ENCODE measurements at regions of chr18 and their contacts with region 1.

Region 1: GRCh38 chr18:12391618-12392165 is 14.7 kb upstream of the AFG3L2 start:
- DNase-seq: peak; percentile 42
- H3K4me3 ChIP-seq: no peak overlapping the region
- H3K27ac ChIP-seq: no peak overlapping the region
- H3K27me3 ChIP-seq: no peaks in the 10 kb centered on the region
- CTCF ChIP-seq: peak; percentile 100

Region 2: DNA sequence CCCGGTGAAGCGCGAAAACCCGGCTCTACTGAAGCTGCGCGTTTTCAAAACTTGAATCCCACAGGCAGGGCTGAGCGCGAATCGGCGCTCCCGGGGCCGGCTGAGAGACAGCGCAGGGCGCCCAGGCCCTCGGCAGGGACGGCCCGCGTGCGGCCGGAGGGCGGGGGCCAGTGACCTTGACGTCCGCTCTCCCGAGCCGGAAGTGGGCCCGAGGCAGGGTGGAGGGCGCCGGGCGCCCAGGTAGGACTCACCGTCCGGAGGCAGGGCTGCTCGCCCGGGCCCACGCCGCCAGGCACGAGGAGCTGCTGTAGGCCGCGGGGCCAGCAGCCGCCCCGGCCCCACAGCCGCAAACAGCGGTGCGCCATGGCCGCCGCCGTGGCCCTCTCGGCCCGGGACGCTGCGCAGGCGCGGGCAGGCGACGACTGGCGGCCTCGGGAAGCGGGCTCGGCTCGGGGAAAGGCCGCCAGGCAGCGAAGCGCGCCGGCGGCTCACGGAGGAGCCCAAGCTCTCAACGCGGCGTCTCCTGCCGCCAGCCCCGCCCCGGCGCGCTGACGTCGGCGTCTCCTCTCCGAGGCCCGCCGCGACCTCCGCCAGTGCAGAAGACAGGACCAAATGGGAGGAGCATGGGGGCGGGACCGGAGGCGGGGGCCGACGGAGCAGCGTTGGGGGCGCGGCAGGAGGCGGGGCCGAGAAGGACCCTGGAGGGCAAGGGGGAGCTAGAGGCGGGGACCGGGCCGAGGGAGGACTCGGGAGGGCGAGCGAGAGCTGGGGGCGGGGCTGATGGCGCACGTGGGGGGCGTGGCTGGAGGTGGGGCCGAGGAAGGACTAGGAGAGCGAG is 14.8 kb before region 1 on chr18 and contains the start of gene AFG3L2:
- CTCF ChIA-PET with region 1: interaction called, 21 read pairs
- POLR2A ChIA-PET with region 1: no interaction called
- DNase-seq: peak; percentile 98
- H3K4me3 ChIP-seq: peak within 1 kb of the TSS; percentile 82
- H3K27ac ChIP-seq: peak within 1 kb of the TSS; percentile 98
- H3K27me3 ChIP-seq: no peaks in the 10 kb centered on the region
- CTCF ChIP-seq: no peak
- polyA plus RNA-seq, gene AFG3L2: 30.3 and 38.0 TPM in 2 replicates

Region 3: DNA sequence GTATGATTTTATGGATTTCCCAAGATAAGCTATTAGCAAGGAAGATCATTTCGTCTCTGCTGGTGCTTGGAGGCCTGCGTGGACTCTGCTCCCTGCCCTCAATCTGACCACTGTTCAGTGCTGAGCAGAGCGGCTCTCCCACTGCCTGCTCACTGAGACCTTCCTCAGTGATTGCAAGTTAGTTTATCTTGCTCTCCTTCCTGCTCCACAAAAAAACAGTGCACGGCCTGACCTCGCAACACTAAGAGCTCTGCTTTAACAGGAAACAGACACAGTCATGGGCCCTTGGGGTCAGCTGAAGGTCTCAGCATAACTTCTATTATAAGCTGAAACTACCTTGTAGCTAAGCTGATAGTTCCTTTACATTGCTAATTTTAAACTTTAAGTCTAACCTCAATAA is 69.2 kb after region 1 on chr18:
- CTCF ChIA-PET with region 1: interaction called, 14 read pairs
- POLR2A ChIA-PET with region 1: no interaction called
- DNase-seq: no peak
- H3K4me3 ChIP-seq: no peak overlapping the region
- H3K27ac ChIP-seq: no peak overlapping the region
- H3K27me3 ChIP-seq: no peaks in the 10 kb centered on the region
- CTCF ChIP-seq: no peak

Region 4: GRCh38 chr18:12657684-12658425 is 266.2 kb after region 1 on chr18 and contains the start of gene SPIRE1:
- CTCF ChIA-PET with region 1: interaction called, 179 read pairs
- POLR2A ChIA-PET with region 1: interaction called, 5 read pairs
- DNase-seq: no peak
- H3K4me3 ChIP-seq: peak within 1 kb of the TSS; percentile 68
- H3K27ac ChIP-seq: peak within 1 kb of the TSS; percentile 21
- H3K27me3 ChIP-seq: no peaks in the 10 kb centered on the region
- CTCF ChIP-seq: no peak
- polyA plus RNA-seq, gene SPIRE1: 16.3 and 22.2 TPM in 2 replicates

Region 5: GRCh38 chr18:12679183-12679786 is 287.6 kb after region 1 on chr18:
- CTCF ChIA-PET with region 1: interaction called, 11 read pairs
- POLR2A ChIA-PET with region 1: no interaction called
- DNase-seq: no peak
- H3K4me3 ChIP-seq: no peak overlapping the region
- H3K27ac ChIP-seq: no peak overlapping the region
- H3K27me3 ChIP-seq: no peaks in the 10 kb centered on the region
- CTCF ChIP-seq: no peak

Region 6: GRCh38 chr18:12934454-12935071 is 542.9 kb after region 1 on chr18:
- CTCF ChIA-PET with region 1: interaction called, 15 read pairs
- POLR2A ChIA-PET with region 1: no interaction called
- DNase-seq: peak; percentile 63
- H3K4me3 ChIP-seq: no peak overlapping the region
- H3K27ac ChIP-seq: no peak overlapping the region
- H3K27me3 ChIP-seq: no peaks in the 10 kb centered on the region
- CTCF ChIP-seq: peak; percentile 97

Measured in AG04450 (cell line).